ENCODE measurements at regions of chr7 and their contacts with region 1.

Region 1: GRCh38 chr7:104156842-104157277 is 51.0 kb downstream of the ORC5 start:
- DNase-seq: peak in 2 of 4 experiments; percentile 22 to 58
- ATAC-seq: peak; percentile 72; the same call in 2 of the 3 replicates
- H3K4me3 ChIP-seq: no peak overlapping the region
- H3K27ac ChIP-seq: no peak overlapping the region
- H3K4me1 ChIP-seq: no peaks in the 10 kb centered on the region
- H3K27me3 ChIP-seq: no peaks in the 10 kb centered on the region
- CTCF ChIP-seq: peak; percentile 54 to 75 (median 56)
- EP300 ChIP-seq: no peak
- POLR2A ChIP-seq: no peak
- RAD21 ChIP-seq: peak; percentile 88 to 91

Region 2: GRCh38 chr7:103524042-103524907 is 632.6 kb before region 1 on chr7:
- CTCF ChIA-PET with region 1: interaction called, 22 read pairs
- POLR2A ChIA-PET with region 1: no interaction called
- in situ Hi-C with region 1: no loop called
- intact Hi-C with region 1: loop called (anchors 5 kb)
- DNase-seq: peak; percentile 29 to 67 (median 46)
- ATAC-seq: peak; percentile 93
- H3K4me3 ChIP-seq: no peak overlapping the region
- H3K27ac ChIP-seq: no peak overlapping the region
- H3K4me1 ChIP-seq: peaks cover 0 to 3% of the 10 kb centered on the region in 2 experiments; a peak in 2 of 5 replicates
- H3K27me3 ChIP-seq: no peaks in the 10 kb centered on the region; a peak in 1 of 5 replicates
- CTCF ChIP-seq: peak; percentile 69 to 84 (median 74)
- EP300 ChIP-seq: no peak
- POLR2A ChIP-seq: no peak
- RAD21 ChIP-seq: peak; percentile 95 to 96

Region 3: DNA sequence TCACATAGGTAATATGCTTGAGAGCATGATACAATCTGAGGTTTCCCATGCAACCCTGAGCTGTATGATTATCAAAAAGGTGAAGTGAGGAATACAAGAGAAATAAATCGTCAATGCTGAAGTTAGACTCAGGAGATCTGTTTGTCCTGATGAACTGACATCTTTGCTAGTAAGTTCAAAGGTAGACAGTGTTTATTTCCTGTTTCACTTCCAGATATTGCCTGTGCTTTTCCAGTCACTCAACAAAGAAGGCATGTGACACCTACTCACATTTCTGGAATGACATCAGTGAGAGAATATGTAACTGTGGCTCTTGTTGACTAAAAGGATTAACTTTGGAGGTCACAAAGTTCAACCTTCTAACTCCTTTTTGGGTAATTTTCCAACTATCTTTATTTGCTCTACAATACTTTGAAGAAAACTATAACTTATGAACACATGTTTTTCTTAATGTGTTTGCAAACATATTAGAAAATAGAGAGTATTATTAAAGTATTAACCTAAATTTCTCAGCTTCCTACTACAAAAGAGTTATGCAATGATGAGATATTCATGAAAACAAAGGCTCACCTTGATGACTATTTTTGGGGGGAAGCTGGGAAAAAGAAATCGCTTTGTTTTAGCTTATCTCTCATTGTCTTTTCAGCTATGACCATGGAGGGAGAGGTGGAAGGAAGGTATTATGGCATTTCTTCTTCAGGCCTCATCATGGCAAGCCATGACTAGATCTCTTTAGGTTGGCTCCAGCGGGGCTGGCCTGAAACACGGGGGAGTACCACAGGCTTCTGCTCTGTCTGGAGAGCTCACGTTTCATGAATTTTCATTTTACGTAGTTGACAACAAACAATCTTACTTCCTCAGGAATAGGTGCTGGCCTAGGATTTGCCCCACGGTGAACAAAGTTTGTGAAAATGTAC is 496.1 kb before region 1 on chr7:
- CTCF ChIA-PET with region 1: no interaction called
- POLR2A ChIA-PET with region 1: no interaction called
- in situ Hi-C with region 1: no loop called
- intact Hi-C with region 1: loop called (anchors 2 kb)
- DNase-seq: peak in 2 of 4 experiments; percentile 32 to 72
- ATAC-seq: peak; percentile 57
- H3K4me3 ChIP-seq: no peak overlapping the region
- H3K27ac ChIP-seq: peak overlapping the region; percentile 71
- H3K4me1 ChIP-seq: peaks cover 10 to 53% of the 10 kb centered on the region in 2 experiments
- H3K27me3 ChIP-seq: no peaks in the 10 kb centered on the region
- CTCF ChIP-seq: no peak
- EP300 ChIP-seq: peak; percentile 82
- POLR2A ChIP-seq: no peak
- RAD21 ChIP-seq: 0 out of 4 replicates have a peak, but pooled peaks of 1 of the 2 experiments have one; percentile 2

Region 4: DNA sequence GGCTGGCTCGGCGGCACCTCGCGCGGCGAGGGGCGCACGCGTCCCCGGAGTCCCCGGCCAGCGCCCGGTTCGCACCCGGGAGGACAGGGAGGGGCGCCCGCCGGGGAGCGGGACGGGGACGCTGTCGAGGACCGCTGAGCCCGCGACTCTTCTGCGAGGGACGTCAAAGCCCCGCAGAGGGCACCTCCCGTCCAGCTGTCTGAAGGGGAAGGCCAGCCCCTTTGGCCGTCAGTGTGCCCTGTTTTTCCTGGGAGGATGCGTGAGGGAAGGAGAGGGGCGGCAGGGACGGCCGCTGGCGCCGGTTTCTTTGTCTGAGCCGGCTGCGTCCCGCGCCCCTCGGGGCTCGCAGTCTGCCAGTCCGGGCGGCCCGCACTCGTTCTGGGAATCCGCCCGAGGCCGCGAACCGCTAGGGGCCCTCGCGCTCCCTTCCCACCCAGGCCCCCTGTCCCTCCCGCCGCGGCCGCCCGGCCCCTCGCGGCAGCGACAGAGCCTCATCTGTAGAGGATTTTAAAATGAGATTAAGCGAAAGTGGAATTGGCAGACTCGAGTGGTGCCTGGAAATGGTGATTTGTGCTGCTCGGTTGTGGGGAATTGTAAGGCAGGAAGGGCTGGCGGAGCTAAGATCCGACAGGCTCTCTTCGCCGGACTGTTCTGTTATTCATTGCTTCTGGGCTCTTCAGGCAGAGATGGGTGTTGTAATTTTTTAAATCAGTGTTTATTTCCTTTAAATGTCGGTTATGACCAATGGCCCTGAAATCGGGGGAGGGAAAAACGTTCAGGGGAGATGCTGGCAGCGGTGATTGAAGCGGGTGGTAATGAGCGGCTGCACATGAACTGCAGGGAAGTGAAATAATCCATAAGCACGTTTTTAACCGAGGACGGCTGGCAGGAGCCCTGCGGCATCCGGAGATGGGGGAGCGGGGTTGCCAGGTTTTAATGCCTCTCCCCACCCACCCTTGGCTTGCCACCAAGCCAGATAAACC is 166.8 kb before region 1 on chr7:
- CTCF ChIA-PET with region 1: no interaction called
- POLR2A ChIA-PET with region 1: no interaction called
- in situ Hi-C with region 1: loop called (anchors 10 kb)
- intact Hi-C with region 1: no loop called
- DNase-seq: peak; percentile 71 to 82 (median 74)
- ATAC-seq: peak; percentile 71
- H3K4me3 ChIP-seq: peak overlapping the region; percentile 62
- H3K27ac ChIP-seq: peak overlapping the region; percentile 74
- H3K4me1 ChIP-seq: peaks cover 27 to 36% of the 10 kb centered on the region in 2 experiments
- H3K27me3 ChIP-seq: no peaks in the 10 kb centered on the region
- CTCF ChIP-seq: peak in 2 of 3 experiments; percentile 31 to 69; a peak in 4 of 6 replicates
- EP300 ChIP-seq: no peak
- POLR2A ChIP-seq: peak; percentile 59; the same call in 1 of the 2 replicates
- RAD21 ChIP-seq: peak in 1 of 2 experiments; percentile 24; a peak in 2 of 4 replicates

Region 5: GRCh38 chr7:104029765-104030164 is 127.1 kb before region 1 on chr7:
- CTCF ChIA-PET with region 1: no interaction called
- POLR2A ChIA-PET with region 1: no interaction called
- in situ Hi-C with region 1: no loop called
- intact Hi-C with region 1: no loop called
- DNase-seq: no peak
- ATAC-seq: no peak
- H3K4me3 ChIP-seq: no peak overlapping the region
- H3K27ac ChIP-seq: no peak overlapping the region
- H3K4me1 ChIP-seq: peaks cover 0 to 7% of the 10 kb centered on the region in 2 experiments; a peak in 2 of 5 replicates
- H3K27me3 ChIP-seq: no peaks in the 10 kb centered on the region
- CTCF ChIP-seq: no peak
- EP300 ChIP-seq: no peak
- POLR2A ChIP-seq: no peak
- RAD21 ChIP-seq: no peak

Region 6: DNA sequence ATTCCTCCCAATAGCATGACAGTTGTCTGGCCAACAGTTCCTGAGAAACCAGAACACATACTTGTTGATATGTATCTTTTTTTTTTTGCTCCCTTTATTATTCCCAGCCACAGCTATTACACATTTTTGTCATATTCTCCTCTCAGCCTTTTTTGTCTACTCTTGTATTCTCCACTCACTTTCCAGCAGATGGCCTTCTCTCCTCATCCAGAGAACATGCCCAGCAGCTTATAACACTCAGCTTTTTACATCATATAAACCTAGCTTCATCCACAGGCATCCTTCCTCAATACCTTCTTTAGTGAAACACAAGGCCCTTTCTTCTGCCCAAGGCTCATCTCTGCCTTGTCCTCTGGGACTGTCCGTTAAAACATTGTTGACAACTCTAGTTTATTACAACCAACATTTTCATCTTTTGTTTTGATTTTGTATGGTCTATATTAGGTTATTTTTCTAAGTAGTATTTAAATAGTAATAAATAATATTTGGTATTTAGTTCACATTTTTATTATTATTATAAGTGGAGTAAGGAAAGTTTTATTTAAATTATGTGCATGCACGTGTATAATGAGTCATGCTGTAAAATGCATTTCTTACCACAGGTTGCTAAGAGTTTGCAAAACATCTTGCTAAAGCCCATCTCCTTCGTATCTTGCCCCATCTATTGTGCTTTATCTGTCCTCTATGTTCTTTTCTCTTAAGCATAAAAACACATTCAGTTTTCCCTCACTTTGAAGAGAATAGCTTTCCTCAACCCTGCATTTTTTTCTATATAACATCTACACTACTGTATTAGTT is 50.6 kb before region 1 on chr7:
- CTCF ChIA-PET with region 1: no interaction called
- POLR2A ChIA-PET with region 1: no interaction called
- in situ Hi-C with region 1: no loop called
- intact Hi-C with region 1: loop called (anchors 2 kb)
- DNase-seq: peak in 1 of 4 experiments; percentile 33
- ATAC-seq: peak; percentile 83
- H3K4me3 ChIP-seq: no peak overlapping the region
- H3K27ac ChIP-seq: no peak overlapping the region
- H3K4me1 ChIP-seq: no peaks in the 10 kb centered on the region; a peak in 1 of 5 replicates
- H3K27me3 ChIP-seq: no peaks in the 10 kb centered on the region
- CTCF ChIP-seq: peak in 2 of 3 experiments; percentile 32 to 51; a peak in 3 of 6 replicates
- EP300 ChIP-seq: no peak
- POLR2A ChIP-seq: no peak
- RAD21 ChIP-seq: peak; percentile 15 to 65; a peak in 3 of 4 replicates

Measured in K562 (cell line).